CD4-positive, alpha-beta memory T cell (primary cell): ENCODE measurements at regions of chrX and their contacts with region 1.

Region 1: DNA sequence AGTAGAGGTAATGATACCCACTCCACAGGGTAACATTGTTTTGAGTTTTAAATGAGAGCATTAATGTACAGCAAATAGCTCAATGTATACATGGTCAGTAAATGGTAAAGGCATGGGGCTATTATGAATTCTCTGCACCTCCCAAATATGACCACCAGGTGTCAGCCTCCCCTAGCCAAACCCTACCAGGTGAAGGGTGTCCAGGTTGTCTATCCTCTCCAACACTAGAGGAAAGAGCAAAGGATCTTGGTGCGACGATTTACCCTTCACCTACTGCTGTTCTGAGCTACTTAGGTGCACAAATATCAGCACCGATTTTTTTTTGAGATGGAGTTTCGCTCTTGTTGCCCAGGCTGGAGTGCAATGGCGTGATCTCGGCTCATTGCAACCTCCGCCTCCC is 26.5 kb upstream of the XIAP start:
- DNase-seq: peak; percentile 51 to 61 (median 57)
- H3K4me3 ChIP-seq: no peak overlapping the region
- H3K4me3 Mint-ChIP-seq: no peak overlapping the region
- H3K27ac ChIP-seq: no peak overlapping the region
- H3K27ac Mint-ChIP-seq: peak overlapping the region in 2 of 7 donors; percentile 19 to 41
- H3K4me1 ChIP-seq: no peaks in the 10 kb centered on the region
- H3K4me1 Mint-ChIP-seq: peaks cover 0 to 2% (median 0%) of the 10 kb centered on the region in 4 donors
- H3K27me3 ChIP-seq: no peaks in the 10 kb centered on the region
- H3K27me3 Mint-ChIP-seq: no peaks in the 10 kb centered on the region

Region 2: DNA sequence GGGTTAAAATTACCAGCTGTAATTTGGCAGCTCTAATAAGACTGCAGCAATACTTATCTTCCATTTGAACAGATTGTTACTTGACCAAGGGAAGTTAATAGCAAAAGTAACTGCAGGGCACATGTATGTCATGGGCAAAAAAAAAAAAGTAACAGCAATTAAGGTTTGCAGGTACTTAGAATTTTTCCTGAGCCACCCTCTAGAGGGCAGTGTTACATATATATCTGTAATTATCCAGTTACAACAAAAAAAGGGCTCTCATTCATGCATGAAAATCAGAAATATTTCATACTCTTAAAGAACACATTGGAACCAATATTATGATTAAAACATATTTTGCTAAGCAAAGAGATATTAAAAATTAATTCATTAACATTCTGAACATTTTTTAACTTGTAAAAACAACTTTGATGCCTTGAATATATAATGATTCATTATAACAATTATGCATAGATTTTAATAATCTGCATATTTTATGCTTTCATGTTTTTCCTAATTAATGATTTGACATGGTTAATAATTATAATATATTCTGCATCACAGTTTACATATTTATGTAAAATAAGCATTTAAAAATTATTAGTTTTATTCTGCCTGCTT is 51.5 kb after region 1 on chrX:
- CTCF ChIA-PET with region 1: interaction called, 29 read pairs
- POLR2A ChIA-PET with region 1: no interaction called
- intact Hi-C with region 1: loop called (anchors 1 kb)
- DNase-seq: peak; percentile 44 to 57 (median 49)
- H3K4me3 ChIP-seq: no peak overlapping the region
- H3K4me3 Mint-ChIP-seq: no peak overlapping the region
- H3K27ac ChIP-seq: no peak overlapping the region
- H3K27ac Mint-ChIP-seq: no peak overlapping the region
- H3K4me1 ChIP-seq: no peaks in the 10 kb centered on the region
- H3K4me1 Mint-ChIP-seq: peaks cover 5 to 16% (median 10%) of the 10 kb centered on the region in 4 donors
- H3K27me3 ChIP-seq: no peaks in the 10 kb centered on the region
- H3K27me3 Mint-ChIP-seq: no peaks in the 10 kb centered on the region

Region 3: GRCh38 chrX:123899701-123900100 is 66.3 kb after region 1 on chrX:
- CTCF ChIA-PET with region 1: no interaction called
- POLR2A ChIA-PET with region 1: no interaction called
- intact Hi-C with region 1: no loop called
- DNase-seq: no peak
- H3K4me3 ChIP-seq: no peak overlapping the region
- H3K4me3 Mint-ChIP-seq: no peak overlapping the region
- H3K27ac ChIP-seq: no peak overlapping the region
- H3K27ac Mint-ChIP-seq: no peak overlapping the region
- H3K4me1 ChIP-seq: no peaks in the 10 kb centered on the region
- H3K4me1 Mint-ChIP-seq: peaks cover 0 to 3% (median 0%) of the 10 kb centered on the region in 4 donors
- H3K27me3 ChIP-seq: no peaks in the 10 kb centered on the region
- H3K27me3 Mint-ChIP-seq: no peaks in the 10 kb centered on the region

Region 4: GRCh38 chrX:124018023-124018422 is 184.6 kb after region 1 on chrX:
- CTCF ChIA-PET with region 1: interaction called, 13 read pairs
- POLR2A ChIA-PET with region 1: no interaction called
- intact Hi-C with region 1: no loop called
- DNase-seq: peak in 4 of 5 donors; percentile 7 to 21 (median 15)
- H3K4me3 ChIP-seq: no peak overlapping the region
- H3K4me3 Mint-ChIP-seq: peak overlapping the region in 2 of 8 donors; percentile 1 to 2
- H3K27ac ChIP-seq: no peak overlapping the region
- H3K27ac Mint-ChIP-seq: peak overlapping the region in 3 of 7 donors; percentile 23 to 64 (median 41)
- H3K4me1 ChIP-seq: peaks cover 46% of the 10 kb centered on the region
- H3K4me1 Mint-ChIP-seq: peaks cover 16 to 55% (median 24%) of the 10 kb centered on the region in 4 donors
- H3K27me3 ChIP-seq: no peaks in the 10 kb centered on the region
- H3K27me3 Mint-ChIP-seq: no peaks in the 10 kb centered on the region

Region 5: DNA sequence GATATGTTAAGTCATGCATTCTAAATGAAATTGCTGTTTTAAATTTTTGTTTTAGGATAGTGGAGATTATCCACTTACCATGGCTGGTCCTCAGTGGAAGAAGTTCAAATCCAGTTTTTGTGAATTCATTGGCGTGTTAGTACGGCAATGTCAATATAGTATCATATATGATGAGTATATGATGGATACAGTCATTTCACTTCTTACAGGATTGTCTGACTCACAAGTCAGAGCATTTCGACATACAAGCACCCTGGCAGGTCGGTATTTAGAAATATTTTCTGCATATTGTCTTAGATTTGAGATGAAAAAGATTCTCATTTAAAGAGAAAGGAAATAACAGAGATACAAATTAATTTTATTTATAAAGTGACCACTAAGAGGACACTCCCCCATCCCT is 211.7 kb after region 1 on chrX:
- CTCF ChIA-PET with region 1: no interaction called
- POLR2A ChIA-PET with region 1: no interaction called
- intact Hi-C with region 1: loop called (anchors 10 kb)
- DNase-seq: no peak
- H3K4me3 ChIP-seq: no peak overlapping the region
- H3K4me3 Mint-ChIP-seq: no peak overlapping the region
- H3K27ac ChIP-seq: no peak overlapping the region
- H3K27ac Mint-ChIP-seq: no peak overlapping the region
- H3K4me1 ChIP-seq: no peaks in the 10 kb centered on the region
- H3K4me1 Mint-ChIP-seq: peaks cover 6 to 9% (median 8%) of the 10 kb centered on the region in 4 donors
- H3K27me3 ChIP-seq: no peaks in the 10 kb centered on the region
- H3K27me3 Mint-ChIP-seq: no peaks in the 10 kb centered on the region